GM10248 (cell line): ENCODE measurements at regions of chr17 and their contacts with region 1.

Region 1: DNA sequence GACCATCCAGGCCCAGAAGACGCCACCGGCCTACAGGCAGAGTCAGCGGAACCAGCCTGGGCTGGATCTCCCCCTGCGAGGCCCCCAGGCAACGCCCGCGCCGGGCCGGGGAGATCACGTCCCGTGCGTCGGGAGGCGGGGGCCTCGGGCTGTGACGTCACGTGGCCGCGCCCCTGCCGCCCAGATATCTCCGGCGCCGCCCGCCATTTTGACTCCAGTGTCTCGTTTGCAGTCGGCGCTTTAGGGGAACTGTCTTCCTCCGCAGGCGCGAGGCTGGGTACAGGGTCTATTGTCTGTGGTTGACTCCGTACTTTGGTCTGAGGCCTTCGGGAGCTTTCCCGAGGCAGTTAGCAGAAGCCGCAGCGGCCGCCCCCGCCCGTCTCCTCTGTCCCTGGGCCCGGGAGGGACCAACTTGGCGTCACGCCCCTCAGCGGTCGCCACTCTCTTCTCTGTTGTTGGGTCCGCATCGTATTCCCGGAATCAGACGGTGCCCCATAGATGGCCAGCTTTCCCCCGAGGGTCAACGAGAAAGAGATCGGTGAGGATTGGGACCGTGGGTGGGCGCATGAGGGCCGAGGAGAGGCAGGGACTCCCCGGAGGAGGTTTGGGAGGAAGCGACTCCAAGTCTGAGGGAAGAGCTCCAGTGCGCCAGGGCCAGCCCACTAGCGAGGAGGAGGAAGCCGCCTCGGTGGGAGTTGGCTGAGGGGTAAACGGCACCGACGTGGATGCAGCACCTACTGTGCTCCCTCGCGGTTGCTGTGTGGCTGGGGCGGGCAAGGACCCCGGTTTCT is at the start of gene WSB1:
- DNase-seq: peak; percentile 97
- CTCF ChIP-seq: no peak

Region 2: GRCh38 chr17:27245230-27245696 is 48.8 kb before region 1 on chr17:
- CTCF ChIA-PET with region 1: interaction called, 6 read pairs
- POLR2A ChIA-PET with region 1: interaction called, 12 read pairs
- DNase-seq: peak; percentile 82
- CTCF ChIP-seq: peak; percentile 74

Region 3: DNA sequence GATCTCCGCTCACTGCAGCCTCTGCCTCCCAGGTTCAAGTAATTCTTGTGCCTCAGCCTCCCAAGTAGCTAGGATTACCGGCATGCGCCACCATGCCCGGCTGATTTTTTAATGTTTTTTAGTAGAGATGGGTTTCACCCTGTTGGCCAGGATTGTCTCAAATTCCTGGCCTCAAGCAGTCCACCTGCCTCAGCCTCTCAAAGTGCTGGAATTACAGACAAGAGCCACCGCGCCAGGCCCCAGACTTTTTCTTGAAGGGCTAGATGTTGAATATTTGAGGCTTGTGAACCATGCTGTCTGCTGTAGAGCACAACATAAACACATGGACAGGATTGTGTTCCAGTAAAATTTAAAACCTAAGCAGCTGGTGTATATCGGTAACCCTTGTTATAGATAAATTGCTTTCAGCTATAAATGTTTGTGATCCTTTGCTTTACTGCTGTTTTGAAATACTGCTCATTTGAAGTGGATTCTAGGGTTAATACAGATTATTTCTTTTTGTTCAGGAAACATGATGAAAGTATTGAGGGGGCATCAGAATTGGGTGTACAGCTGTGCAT is 12.3 kb after region 1 on chr17:
- CTCF ChIA-PET with region 1: interaction called, 7 read pairs
- POLR2A ChIA-PET with region 1: interaction called, 11 read pairs
- DNase-seq: no peak
- CTCF ChIP-seq: no peak

Region 4: DNA sequence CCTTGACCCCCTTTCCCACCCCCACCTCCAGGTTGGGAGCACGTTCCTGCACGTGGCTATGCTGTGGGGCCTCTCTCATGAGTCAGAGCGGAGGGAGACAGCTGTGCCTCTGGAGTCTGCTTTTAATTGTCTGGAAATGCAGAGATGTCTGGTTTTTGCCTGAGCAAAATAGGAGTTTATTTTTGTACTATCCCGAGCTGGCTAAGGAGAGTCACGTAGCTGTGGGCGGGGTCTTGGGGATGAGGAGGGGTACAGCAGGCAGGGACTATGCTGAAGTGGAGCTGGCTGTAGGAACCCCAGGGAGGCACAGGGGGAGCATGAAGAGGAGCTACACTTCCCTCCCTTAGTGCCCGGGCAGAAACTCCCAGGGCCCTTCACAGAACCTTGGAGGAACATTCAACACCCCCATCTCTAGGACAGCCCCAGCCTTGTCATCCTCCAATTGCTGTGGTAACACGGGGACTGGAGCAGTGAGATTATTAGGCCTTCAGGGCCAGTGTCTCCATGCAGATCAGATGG is 292.2 kb after region 1 on chr17:
- CTCF ChIA-PET with region 1: no interaction called
- POLR2A ChIA-PET with region 1: no interaction called
- DNase-seq: no peak
- CTCF ChIP-seq: no peak

Region 5: DNA sequence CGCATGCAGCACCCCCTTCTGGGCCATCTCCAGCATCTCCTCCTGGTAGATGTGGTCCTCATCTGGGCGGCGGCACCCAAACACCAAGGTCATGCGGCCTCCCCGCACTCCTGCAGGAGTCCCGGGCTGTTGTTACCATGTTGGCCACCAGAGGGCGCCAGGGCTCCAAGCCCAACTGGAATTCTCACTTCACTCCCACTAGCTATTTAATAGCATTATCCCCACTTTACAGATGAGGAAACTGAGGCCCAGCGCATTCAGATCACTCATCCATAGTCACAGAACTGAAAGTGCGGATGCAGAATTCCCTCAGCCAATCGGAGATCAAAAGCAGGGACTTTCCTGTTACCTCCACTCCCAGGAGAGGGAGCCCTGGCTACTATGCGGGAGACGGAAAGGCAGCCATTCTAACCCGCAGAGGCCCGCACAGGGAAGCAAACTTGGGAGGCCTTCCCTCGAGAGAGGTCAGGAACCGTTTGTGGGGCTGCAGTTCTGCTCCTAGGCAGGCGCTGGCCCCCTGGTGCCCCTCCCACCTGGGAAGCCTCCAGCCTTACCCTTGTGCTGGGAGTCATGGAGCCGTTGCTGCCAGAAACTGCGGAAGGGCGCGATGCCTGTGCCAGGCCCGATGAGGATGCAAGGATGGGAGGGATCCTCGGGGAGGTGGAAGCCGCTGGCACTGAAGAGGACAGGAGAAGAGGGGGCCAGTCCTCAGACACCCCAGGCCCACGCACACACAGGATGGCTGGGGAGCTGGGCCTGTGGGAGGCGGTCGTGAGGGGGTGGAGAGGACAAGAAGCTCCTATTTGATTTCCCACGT is 466.2 kb after region 1 on chr17:
- CTCF ChIA-PET with region 1: no interaction called
- POLR2A ChIA-PET with region 1: no interaction called
- DNase-seq: peak; percentile 73
- CTCF ChIP-seq: peak; percentile 94